ENCODE measurements at regions of chr3 and their contacts with region 1.

Region 1: DNA sequence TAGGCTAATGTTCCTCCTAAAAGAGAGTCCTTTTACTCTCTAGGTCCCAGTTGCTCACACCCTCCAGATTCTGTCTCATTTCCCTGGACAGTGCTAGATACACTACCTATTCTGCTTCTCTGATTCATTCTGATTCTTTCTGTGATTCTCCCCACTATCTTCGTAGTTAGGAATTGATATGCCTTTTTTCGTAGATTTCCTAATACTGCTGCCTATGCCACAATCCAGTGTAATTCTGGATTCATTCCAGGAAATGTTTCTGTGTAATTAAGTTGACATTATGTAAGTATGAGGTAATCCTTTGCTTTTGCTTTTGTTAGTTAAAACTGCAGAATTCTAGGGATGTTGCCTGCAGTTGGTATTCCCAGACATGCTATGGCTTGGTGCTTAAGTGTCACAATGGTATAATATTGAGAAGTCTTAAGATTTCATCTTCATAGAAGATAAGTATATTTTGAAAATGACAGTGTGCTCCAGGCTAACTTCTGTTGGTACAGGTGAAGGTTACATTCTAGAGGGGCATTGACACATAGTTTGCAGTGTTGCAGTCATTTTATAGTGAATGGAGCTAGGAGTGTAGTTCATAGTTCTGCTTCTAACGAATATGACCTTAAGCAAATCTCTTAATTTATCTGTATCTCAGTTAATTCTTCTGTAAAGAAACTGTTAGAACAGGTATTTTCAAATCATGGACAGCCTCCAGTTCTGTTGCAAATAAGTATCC is 54.3 kb downstream of the RIOX2 start:
- DNase-seq: no peak

Region 2: GRCh38 chr3:96865605-96866004 is 1052.4 kb before region 1 on chr3:
- intact Hi-C with region 1: loop called in 1 of 2 experiments (anchors 5 kb)
- DNase-seq: no peak

Region 3: DNA sequence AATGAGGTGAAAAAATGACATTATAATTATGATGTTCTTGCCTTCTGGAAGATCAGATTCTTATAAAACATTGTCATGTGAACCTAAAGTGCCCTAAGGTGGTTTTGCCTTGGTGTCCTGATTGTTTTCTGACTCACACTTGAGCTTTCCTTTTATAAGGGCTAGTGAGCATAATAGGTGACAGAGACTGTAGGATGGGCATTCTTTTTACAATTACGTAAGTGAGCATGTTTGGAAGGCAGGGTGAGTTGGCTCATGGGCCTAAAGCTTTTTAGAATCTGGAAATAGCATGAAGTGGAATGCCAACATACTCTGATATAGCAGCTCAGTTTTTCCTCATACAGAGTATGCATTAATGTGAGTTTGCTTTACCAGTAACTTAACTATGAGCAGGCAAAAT is 54.9 kb before region 1 on chr3:
- intact Hi-C with region 1: no loop called
- DNase-seq: no peak

Measured in posterior vena cava (tissue), 2 donors.